Gastrocnemius medialis (tissue), 4 donors: ENCODE measurements at regions of chr10 and their contacts with region 1.

Region 1: GRCh38 chr10:132023092-132023811 is 41.5 kb upstream of the BNIP3 start:
- DNase-seq: peak; percentile 59 to 74
- ATAC-seq: peak; percentile 94 to 98
- H3K4me3 ChIP-seq: peak overlapping the region; percentile 46 to 66 (median 53)
- H3K27ac ChIP-seq: no peak overlapping the region
- H3K4me1 ChIP-seq: peaks cover 0 to 7% of the 10 kb centered on the region in 2 donors
- H3K27me3 ChIP-seq: peaks cover under 1 to 23% (median 9%) of the 10 kb centered on the region in 3 donors
- CTCF ChIP-seq: peak; percentile 89 to 96 (median 92)
- POLR2A ChIP-seq: no peak

Region 2: DNA sequence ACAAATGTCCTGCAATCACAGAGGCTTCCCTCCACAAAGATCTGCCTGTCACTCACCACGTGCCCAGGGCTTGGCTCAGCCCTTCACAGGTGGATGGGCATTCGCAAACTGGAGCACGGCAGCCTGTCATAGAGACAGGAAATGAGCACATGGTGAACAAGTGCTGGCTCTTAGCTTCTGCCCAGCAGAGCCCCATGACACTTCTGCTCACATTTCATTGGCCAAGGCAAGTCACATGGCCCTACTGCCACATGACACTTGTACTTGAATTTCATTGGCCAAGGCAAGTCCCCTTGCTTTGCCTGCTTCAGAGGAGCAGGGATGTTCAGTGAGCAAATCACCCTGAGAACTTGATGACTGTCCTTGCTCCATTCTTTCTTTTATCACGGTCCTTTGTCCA is 233.2 kb before region 1 on chr10:
- in situ Hi-C with region 1: no loop called
- intact Hi-C with region 1: no loop called
- DNase-seq: peak in 1 of 2 donors; percentile 34
- ATAC-seq: peak in 1 of 2 donors; percentile 27
- H3K4me3 ChIP-seq: no peak overlapping the region
- H3K27ac ChIP-seq: no peak overlapping the region
- H3K4me1 ChIP-seq: no peaks in the 10 kb centered on the region
- H3K27me3 ChIP-seq: no peaks in the 10 kb centered on the region
- CTCF ChIP-seq: no peak
- POLR2A ChIP-seq: no peak

Region 3: DNA sequence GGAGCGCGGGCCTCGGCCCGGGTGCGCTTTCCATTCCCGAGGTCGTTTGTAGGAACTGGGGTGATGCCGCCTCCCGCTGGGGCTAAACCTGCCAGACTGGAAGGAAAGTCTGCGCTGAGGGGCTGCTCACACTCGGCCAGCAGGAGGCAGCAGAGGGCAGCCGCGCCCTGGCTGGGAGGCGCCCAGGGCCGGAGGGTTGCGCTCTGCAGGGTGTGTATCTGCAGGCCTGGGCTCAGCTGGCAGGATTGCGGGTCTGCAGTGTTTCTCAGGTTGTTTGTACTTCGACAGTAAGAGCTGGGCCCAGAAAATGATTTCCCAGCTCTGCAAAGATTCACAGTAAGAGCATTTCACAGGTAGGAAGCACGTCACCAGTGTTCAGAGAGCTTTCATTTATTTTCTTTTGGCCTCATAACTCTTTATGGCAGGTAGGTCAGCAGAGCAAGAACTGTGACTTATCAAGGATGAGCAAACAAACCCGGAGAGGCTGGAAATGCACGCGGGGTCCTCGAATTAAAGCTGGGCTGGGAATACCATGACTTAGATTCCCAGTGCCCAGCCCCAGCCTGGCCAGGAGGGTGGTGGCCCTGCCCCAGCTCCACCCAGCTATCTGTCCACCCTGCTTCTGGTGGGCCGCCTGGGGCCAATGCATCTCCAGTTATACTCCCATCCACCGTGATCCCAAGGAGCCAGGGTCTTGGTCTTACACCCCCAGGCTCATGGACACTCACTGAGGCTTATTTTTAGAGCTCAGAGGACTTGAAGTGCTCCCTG is 137.7 kb before region 1 on chr10:
- in situ Hi-C with region 1: loop called (anchors 5 kb)
- intact Hi-C with region 1: loop called (anchors 1 kb)
- DNase-seq: peak; percentile 38 to 58
- ATAC-seq: peak; percentile 85 to 92
- H3K4me3 ChIP-seq: no peak overlapping the region
- H3K27ac ChIP-seq: no peak overlapping the region
- H3K4me1 ChIP-seq: no peaks in the 10 kb centered on the region
- H3K27me3 ChIP-seq: peaks cover 0 to 3% (median 0%) of the 10 kb centered on the region in 3 donors
- CTCF ChIP-seq: peak; percentile 92 to 99 (median 96)
- POLR2A ChIP-seq: no peak

Region 4: DNA sequence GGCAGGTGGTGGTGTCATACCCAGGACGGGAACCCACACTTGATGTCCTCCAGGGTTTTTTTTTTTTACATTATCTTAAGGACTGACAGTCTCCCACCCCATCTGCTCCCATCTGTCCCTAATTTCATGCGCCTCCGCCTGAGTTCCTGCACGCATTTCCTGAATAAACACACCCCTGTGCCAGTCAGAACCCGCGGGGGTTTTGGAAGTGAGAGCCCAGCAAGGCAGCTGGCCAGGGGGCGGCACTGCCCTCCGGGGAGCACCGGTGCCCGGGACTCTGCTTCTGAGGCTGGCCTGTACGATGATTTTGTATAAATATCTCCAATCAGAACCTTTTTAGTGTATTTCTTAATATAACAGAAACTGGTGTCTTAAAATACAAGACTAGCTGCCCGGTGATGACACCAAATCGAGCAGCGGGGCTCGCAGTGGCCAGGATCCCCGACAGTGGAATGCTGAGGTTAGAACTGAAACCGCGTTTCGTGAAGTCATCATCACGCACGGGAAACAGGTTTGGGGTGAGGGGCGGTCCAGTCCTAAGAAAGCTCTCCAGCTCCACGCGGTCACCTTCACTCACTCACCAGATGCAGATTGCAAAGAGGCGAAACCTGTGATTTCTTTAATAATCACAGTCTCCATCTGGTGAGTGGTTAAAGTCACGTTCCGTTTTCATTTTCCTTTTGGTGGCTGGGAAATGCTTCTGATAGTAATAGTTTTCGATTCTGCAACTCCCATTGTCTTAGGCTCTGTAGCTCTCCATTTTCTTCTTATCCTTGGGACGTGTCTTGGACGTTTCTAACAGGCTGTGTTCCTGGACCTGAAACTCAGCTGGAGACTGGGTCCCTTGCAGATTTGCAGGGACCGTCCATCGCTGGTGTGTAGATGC is 61.2 kb before region 1 on chr10:
- in situ Hi-C with region 1: no loop called
- intact Hi-C with region 1: loop called (anchors 5 kb)
- DNase-seq: no peak
- ATAC-seq: peak; percentile 35 to 47
- H3K4me3 ChIP-seq: peak overlapping the region; percentile 26 to 57 (median 46)
- H3K27ac ChIP-seq: peak overlapping the region; percentile 69 to 77 (median 70)
- H3K4me1 ChIP-seq: peaks cover 16 to 17% of the 10 kb centered on the region in 2 donors
- H3K27me3 ChIP-seq: no peaks in the 10 kb centered on the region
- CTCF ChIP-seq: no peak
- POLR2A ChIP-seq: no peak

Region 5: GRCh38 chr10:131981429-131982184 is 41.6 kb before region 1 on chr10 and contains the start of gene BNIP3:
- in situ Hi-C with region 1: no loop called
- intact Hi-C with region 1: loop called (anchors 1 kb)
- DNase-seq: peak; percentile 94
- ATAC-seq: peak; percentile 74 to 84
- H3K4me3 ChIP-seq: peak within 1 kb of the TSS; percentile 81 to 99 (median 91)
- H3K27ac ChIP-seq: peak within 1 kb of the TSS; percentile 93 to 99 (median 95)
- H3K4me1 ChIP-seq: peaks cover 24 to 30% of the 10 kb centered on the region in 2 donors
- H3K27me3 ChIP-seq: no peaks in the 10 kb centered on the region
- CTCF ChIP-seq: peak in 2 of 5 experiments; percentile 2 to 21
- POLR2A ChIP-seq: peak; percentile 98 to 99
- total RNA-seq, gene BNIP3: 337 to 1,280 (median 583) TPM

Region 6: GRCh38 chr10:131997366-131998049 is 25.7 kb before region 1 on chr10:
- in situ Hi-C with region 1: no loop called
- intact Hi-C with region 1: loop called (anchors 1 kb)
- DNase-seq: peak; percentile 92
- ATAC-seq: peak; percentile 96 to 97
- H3K4me3 ChIP-seq: peak overlapping the region; percentile 29 to 51 (median 36)
- H3K27ac ChIP-seq: peak overlapping the region; percentile 88 to 97 (median 92)
- H3K4me1 ChIP-seq: peaks cover 28 to 47% of the 10 kb centered on the region in 2 donors
- H3K27me3 ChIP-seq: no peaks in the 10 kb centered on the region
- CTCF ChIP-seq: peak in 1 of 5 experiments; percentile 16
- POLR2A ChIP-seq: peak; percentile 17 to 53

Region 7: DNA sequence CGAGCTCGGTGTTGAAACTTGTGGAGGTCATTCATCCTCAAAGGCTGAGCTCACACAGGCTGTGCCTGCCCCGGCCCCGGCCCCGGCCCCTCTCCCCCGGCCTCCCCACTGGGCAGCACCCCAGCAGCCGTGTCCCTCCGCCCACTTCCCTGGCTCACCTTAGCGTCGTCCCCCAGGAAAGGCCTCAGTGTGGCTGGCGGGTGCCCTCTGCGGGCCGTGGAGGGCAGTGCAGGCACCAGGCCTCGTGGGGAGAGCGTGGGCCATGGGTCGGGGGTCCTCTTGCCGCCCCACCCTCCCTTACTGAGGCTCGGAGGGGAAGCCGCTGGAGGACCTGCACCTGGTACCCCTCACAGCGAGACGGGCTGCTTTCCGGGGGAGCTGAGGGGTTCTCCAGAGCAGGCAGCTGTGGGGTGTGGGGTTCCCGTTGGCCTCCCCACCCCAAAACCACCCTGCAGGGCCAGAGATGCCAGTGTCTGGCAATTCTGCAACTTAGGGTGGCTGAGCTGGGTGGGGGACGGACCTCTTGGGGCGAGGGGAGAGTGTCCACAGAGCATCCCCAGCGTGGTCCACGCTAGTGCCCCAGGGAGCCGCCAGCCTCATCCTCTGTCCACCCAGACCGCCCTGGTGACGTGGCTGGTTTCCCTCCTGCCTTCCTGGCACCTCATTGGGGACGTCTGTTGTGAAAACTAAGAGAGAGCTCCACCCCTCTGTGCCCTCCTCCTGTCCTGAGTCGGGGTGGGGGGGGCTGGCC is 119.3 kb after region 1 on chr10:
- in situ Hi-C with region 1: no loop called
- intact Hi-C with region 1: loop called (anchors 5 kb)
- DNase-seq: no peak
- ATAC-seq: peak; percentile 66 to 74
- H3K4me3 ChIP-seq: no peak overlapping the region
- H3K27ac ChIP-seq: no peak overlapping the region
- H3K4me1 ChIP-seq: no peaks in the 10 kb centered on the region
- H3K27me3 ChIP-seq: no peaks in the 10 kb centered on the region
- CTCF ChIP-seq: peak; percentile 49 to 91 (median 83)
- POLR2A ChIP-seq: no peak